Heart left ventricle (tissue), 16 donors: ENCODE measurements at regions of chr10 and their contacts with region 1.

Region 1: DNA sequence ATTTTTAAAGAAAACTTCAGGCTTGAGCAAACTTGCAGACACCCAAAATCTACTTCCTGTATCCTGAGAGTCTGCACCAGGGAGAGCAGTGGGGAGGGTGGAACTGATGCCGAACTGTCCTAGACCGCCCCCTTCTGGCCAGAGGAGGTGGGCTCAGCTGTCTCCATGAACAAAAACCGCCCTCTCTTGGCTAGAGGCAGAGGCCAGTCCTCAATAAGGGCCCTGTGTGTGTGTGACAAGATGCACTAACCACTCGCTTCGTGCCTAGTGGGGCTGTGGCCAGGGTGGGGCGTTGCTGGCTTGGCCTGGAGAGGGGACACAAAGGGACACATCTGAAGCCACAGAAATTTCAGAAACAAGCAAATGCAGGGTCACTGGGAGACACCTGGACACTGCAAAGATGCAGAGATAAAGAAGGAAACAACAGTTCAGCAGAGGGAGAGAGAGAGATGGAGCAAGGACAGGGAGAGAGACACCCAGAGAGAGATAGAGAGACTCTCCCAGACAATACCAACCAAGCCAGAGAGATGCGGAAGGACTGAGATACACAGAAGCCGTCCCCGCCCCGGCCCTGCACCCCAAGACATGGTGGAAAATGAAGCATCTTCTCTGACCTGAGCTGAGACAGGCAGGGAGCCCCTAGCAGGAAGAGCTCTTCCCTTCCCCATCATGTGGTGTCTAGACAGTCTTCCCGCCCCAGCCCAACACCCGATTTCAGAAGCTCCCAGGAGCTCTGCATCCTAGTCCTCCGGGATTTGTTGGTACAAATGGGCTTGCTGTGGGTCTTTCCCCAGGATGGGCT is 22.7 kb upstream of the FXYD4 start:
- DNase-seq: peak; percentile 81 to 88 (median 86)
- ATAC-seq: peak; percentile 88 to 99 (median 98)
- H3K4me3 ChIP-seq: no peak overlapping the region
- H3K27ac ChIP-seq: no peak overlapping the region
- H3K4me1 ChIP-seq: peaks cover 0 to 7% (median 0%) of the 10 kb centered on the region in 12 donors
- H3K27me3 ChIP-seq: peaks cover 0 to 19% (median 2%) of the 10 kb centered on the region in 9 donors
- CTCF ChIP-seq: peak; percentile 81 to 91 (median 85)
- POLR2A ChIP-seq: no peak

Region 2: GRCh38 chr10:42866115-42866995 is 482.4 kb before region 1 on chr10:
- intact Hi-C with region 1: loop called in 1 of 10 experiments (anchors 10 kb)
- DNase-seq: peak; percentile 75 to 93 (median 84)
- ATAC-seq: peak; percentile 96 to 100 (median 100)
- H3K4me3 ChIP-seq: peak overlapping the region in 10 of 12 donors; percentile 5 to 45 (median 29)
- H3K27ac ChIP-seq: no peak overlapping the region
- H3K4me1 ChIP-seq: peaks cover 0 to 18% (median 11%) of the 10 kb centered on the region in 12 donors
- H3K27me3 ChIP-seq: peaks cover 5 to 49% (median 19%) of the 10 kb centered on the region in 9 donors
- CTCF ChIP-seq: peak; percentile 54 to 88 (median 80)
- POLR2A ChIP-seq: no peak

Region 3: DNA sequence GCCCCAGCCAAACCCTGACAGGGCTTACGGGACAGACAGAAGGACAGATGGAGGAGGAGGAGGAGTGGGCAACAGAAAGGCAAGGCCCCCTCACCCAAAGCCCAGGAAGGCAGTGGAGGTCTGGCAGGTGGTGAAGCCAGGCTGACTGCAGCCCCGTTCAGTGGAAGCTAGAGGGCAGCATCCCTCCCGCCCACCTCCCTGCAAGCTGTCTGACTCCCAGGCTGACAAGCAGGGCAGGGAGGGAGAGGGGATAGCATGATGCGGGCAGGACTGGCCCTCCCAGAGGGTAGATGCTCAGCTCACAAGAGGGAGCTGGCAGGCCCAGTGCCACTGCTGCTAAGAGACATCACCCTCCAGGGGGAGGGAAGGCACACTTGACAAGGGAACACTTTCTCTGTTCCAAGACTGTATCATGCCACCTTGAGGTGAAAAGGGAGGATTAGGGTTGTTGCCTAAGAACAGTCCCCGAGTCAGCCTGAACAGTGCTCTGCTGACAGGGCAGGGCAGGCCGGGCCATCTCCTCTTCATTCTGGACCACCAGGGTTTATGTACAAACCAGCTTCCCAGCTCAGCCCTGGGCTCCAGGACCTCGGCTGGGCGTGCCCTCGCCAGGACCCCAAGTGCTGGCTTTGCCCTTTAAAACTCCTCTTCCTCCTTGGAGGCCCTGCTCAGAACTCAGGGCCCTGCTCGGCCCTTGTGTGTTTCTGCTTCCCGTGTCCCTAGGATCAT is 143.6 kb before region 1 on chr10:
- intact Hi-C with region 1: loop called in 2 of 10 experiments (anchors 5 to 10 kb)
- DNase-seq: peak; percentile 26 to 67 (median 45)
- ATAC-seq: peak; percentile 45 to 70 (median 62)
- H3K4me3 ChIP-seq: no peak overlapping the region
- H3K27ac ChIP-seq: no peak overlapping the region
- H3K4me1 ChIP-seq: peaks cover 0 to 13% (median 7%) of the 10 kb centered on the region in 12 donors
- H3K27me3 ChIP-seq: peaks cover 0 to 17% (median 0%) of the 10 kb centered on the region in 9 donors
- CTCF ChIP-seq: peak; percentile 53 to 72 (median 62)
- POLR2A ChIP-seq: no peak

Region 4: GRCh38 chr10:43218443-43219185 is 130.1 kb before region 1 on chr10:
- intact Hi-C with region 1: no loop called
- DNase-seq: peak in 2 of 5 donors; percentile 9 to 43
- ATAC-seq: no peak
- H3K4me3 ChIP-seq: no peak overlapping the region
- H3K27ac ChIP-seq: no peak overlapping the region
- H3K4me1 ChIP-seq: peaks cover 0 to 6% (median 0%) of the 10 kb centered on the region in 12 donors
- H3K27me3 ChIP-seq: peaks cover 0 to 22% (median 0%) of the 10 kb centered on the region in 9 donors
- CTCF ChIP-seq: no peak
- POLR2A ChIP-seq: no peak

Region 5: GRCh38 chr10:43292755-43293676 is 55.7 kb before region 1 on chr10:
- intact Hi-C with region 1: loop called (anchors 2 to 5 kb)
- DNase-seq: peak in 4 of 5 donors; percentile 23 to 55 (median 42)
- ATAC-seq: peak; percentile 32 to 80 (median 74)
- H3K4me3 ChIP-seq: no peak overlapping the region
- H3K27ac ChIP-seq: no peak overlapping the region
- H3K4me1 ChIP-seq: peaks cover 0 to 13% (median 0%) of the 10 kb centered on the region in 12 donors
- H3K27me3 ChIP-seq: peaks cover 0 to 39% (median 8%) of the 10 kb centered on the region in 9 donors
- CTCF ChIP-seq: peak; percentile 50 to 80 (median 68)
- POLR2A ChIP-seq: no peak

Region 6: GRCh38 chr10:43299579-43299978 is 49.1 kb before region 1 on chr10:
- intact Hi-C with region 1: loop called in 3 of 10 experiments (anchors 5 kb)
- DNase-seq: no peak
- ATAC-seq: no peak
- H3K4me3 ChIP-seq: no peak overlapping the region
- H3K27ac ChIP-seq: peak overlapping the region in 1 of 12 donors; percentile 32
- H3K4me1 ChIP-seq: peaks cover 0 to 6% (median 4%) of the 10 kb centered on the region in 12 donors
- H3K27me3 ChIP-seq: peaks cover 0 to 38% (median 0%) of the 10 kb centered on the region in 9 donors
- CTCF ChIP-seq: no peak
- POLR2A ChIP-seq: no peak

Region 7: GRCh38 chr10:43461950-43462349 is 113.2 kb after region 1 on chr10:
- intact Hi-C with region 1: loop called in 1 of 10 experiments (anchors 5 kb)
- DNase-seq: no peak
- ATAC-seq: peak in 2 of 4 donors; percentile 67 to 70
- H3K4me3 ChIP-seq: peak overlapping the region in 6 of 12 donors; percentile 9 to 43 (median 20)
- H3K27ac ChIP-seq: no peak overlapping the region
- H3K4me1 ChIP-seq: peaks cover 0 to 3% (median 0%) of the 10 kb centered on the region in 12 donors
- H3K27me3 ChIP-seq: no peaks in the 10 kb centered on the region
- CTCF ChIP-seq: peak; percentile 63 to 84 (median 76)
- POLR2A ChIP-seq: no peak